AG04450 (cell line): ENCODE measurements at regions of chr9 and their contacts with region 1.

Region 1: GRCh38 chr9:99012942-99013512 is 69.3 kb downstream of the COL15A1 start:
- DNase-seq: no peak
- H3K4me3 ChIP-seq: no peak overlapping the region
- H3K27ac ChIP-seq: no peak overlapping the region
- H3K27me3 ChIP-seq: no peaks in the 10 kb centered on the region
- CTCF ChIP-seq: 0 out of 2 replicates have a peak, but pooled peaks have one; percentile 9

Region 2: DNA sequence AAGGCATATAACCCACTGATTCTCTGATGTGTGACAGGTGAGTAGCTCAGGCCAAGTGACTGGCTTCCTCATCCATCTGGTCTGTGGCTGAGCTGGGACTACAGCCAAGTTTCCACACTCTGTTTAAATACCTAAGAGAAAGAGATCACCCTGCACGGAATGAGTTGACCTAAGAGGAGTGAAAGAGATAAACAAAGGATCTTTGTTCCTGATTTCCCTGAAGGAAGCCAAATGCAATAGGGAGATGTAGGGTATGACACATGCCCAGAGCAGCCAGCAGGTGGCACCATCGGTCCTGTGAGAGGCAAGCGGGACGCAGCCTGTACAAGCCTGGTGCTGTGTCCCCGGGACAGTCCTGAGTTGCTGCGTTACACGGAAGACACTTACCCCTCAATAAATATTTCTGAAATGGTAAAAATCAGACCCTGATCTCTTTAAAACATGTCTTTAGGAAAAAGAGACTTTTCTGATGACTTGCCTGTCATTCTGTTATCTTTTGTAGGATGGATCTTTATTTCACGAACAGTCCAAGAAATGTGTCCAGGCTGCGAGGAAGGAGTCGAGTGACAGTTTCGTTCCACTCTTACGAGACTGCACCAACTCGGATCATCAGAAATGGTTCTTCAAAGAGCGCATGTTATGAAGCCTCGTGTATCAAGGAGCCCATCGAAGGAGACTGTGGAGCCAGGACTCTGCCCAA is 164.4 kb before region 1 on chr9:
- CTCF ChIA-PET with region 1: interaction called, 11 read pairs
- POLR2A ChIA-PET with region 1: no interaction called
- DNase-seq: peak; percentile 90
- H3K4me3 ChIP-seq: peak overlapping the region; percentile 11
- H3K27ac ChIP-seq: peak overlapping the region; percentile 32
- H3K27me3 ChIP-seq: peaks cover 15% of the 10 kb centered on the region
- CTCF ChIP-seq: peak; percentile 96

Region 3: DNA sequence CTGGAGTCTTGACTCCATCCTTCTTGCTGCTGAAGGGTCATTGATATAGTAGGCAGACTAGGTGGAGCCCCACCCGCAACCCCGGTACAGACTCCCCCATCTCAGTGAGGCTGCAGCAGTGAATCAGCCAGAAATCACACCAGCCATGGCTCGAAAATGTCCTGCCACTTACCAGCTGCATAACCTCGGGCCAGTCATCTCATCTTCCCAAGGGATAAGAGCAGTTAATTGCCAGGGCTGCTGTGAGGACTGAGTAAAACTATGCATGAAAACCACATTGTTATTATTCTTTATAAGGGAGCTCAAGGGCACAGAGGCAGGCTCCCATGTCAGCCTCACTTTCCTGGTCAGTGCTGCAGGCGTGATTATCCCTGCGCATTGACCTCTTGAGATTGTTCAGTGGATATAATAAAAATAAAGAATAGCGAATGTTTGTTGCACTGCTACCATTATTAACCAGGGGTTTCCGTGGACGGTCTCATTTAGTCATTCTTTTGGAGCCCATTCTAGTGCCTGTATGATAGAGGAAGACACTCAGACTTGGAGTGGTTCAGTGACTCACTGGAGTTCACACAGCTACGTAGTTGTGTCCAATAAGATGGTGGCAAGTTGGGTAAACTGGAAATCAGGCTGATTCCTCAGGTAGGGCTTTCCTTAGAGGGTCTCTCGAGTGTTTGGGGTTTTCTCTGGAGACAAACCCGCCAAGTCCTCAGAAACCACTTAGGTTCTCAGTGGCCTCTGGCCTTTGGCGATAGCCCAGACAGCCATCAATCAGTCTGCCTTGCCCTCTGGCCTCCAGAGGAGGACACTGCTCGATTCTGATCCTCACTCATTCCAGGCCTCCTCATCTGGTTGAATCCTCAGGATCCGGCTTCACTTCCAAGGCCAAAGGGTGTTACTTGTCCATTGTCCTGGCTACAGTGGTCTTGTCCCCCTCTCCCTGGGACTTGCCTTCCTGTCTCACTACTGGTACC is 29.4 kb before region 1 on chr9:
- CTCF ChIA-PET with region 1: no interaction called
- POLR2A ChIA-PET with region 1: no interaction called
- DNase-seq: peak; percentile 67
- H3K4me3 ChIP-seq: no peak overlapping the region
- H3K27ac ChIP-seq: peak overlapping the region; percentile 47
- H3K27me3 ChIP-seq: peaks cover 4% of the 10 kb centered on the region
- CTCF ChIP-seq: no peak